G401 (cell line): ENCODE measurements at regions of chr1 and their contacts with region 1.

Region 1: GRCh38 chr1:26391450-26391849 is 18.9 kb upstream of the ZNF683 start:
- DNase-seq: no peak

Region 2: GRCh38 chr1:26190373-26190987 is 201.0 kb before region 1 on chr1 and contains the start of gene CATSPER4:
- in situ Hi-C with region 1: no loop called
- DNase-seq: peak; percentile 29
- total RNA-seq, gene CATSPER4: not detected in 2 replicates

Region 3: GRCh38 chr1:26344147-26344920 is 47.1 kb before region 1 on chr1:
- in situ Hi-C with region 1: loop called (anchors 5 kb)
- DNase-seq: no peak